H1 (cell line): ENCODE measurements at regions of chr4 and their contacts with region 1.

Region 1: GRCh38 chr4:48290146-48290772 is 20.6 kb upstream of the TEC start:
- DNase-seq: peak in 1 of 2 experiments; percentile 58
- H3K4me3 ChIP-seq: no peak overlapping the region
- H3K27ac ChIP-seq: no peak overlapping the region
- H3K4me1 ChIP-seq: no peaks in the 10 kb centered on the region
- H3K27me3 ChIP-seq: no peaks in the 10 kb centered on the region
- CTCF ChIP-seq: peak in 2 of 3 experiments; percentile 42 to 65; a peak in 2 of 4 replicates
- EP300 ChIP-seq: no peak
- POLR2A ChIP-seq: no peak
- RAD21 ChIP-seq: peak; percentile 55 to 63

Region 2: GRCh38 chr4:47907089-47907646 is 383.1 kb before region 1 on chr4:
- CTCF ChIA-PET with region 1: no interaction called
- POLR2A ChIA-PET with region 1: no interaction called
- DNase-seq: no peak
- H3K4me3 ChIP-seq: no peak overlapping the region
- H3K27ac ChIP-seq: no peak overlapping the region
- H3K4me1 ChIP-seq: peaks cover 0 to 2% (median 0%) of the 10 kb centered on the region in 4 experiments; a peak in 1 of 7 replicates
- H3K27me3 ChIP-seq: no peaks in the 10 kb centered on the region
- CTCF ChIP-seq: no peak
- EP300 ChIP-seq: no peak
- POLR2A ChIP-seq: no peak
- RAD21 ChIP-seq: no peak

Region 3: GRCh38 chr4:48275247-48275646 is 15.0 kb before region 1 on chr4:
- CTCF ChIA-PET with region 1: interaction called, 18 read pairs
- POLR2A ChIA-PET with region 1: interaction called, 3 read pairs
- DNase-seq: no peak
- H3K4me3 ChIP-seq: no peak overlapping the region
- H3K27ac ChIP-seq: no peak overlapping the region
- H3K4me1 ChIP-seq: peaks cover 0 to 2% (median 0%) of the 10 kb centered on the region in 4 experiments; a peak in 3 of 7 replicates
- H3K27me3 ChIP-seq: no peaks in the 10 kb centered on the region
- CTCF ChIP-seq: peak in 2 of 3 experiments; percentile 50 to 79; a peak in 2 of 4 replicates
- EP300 ChIP-seq: no peak
- POLR2A ChIP-seq: no peak
- RAD21 ChIP-seq: peak; percentile 56 to 68